ENCODE measurements at regions of chr12 and their contacts with region 1.

Region 1: DNA sequence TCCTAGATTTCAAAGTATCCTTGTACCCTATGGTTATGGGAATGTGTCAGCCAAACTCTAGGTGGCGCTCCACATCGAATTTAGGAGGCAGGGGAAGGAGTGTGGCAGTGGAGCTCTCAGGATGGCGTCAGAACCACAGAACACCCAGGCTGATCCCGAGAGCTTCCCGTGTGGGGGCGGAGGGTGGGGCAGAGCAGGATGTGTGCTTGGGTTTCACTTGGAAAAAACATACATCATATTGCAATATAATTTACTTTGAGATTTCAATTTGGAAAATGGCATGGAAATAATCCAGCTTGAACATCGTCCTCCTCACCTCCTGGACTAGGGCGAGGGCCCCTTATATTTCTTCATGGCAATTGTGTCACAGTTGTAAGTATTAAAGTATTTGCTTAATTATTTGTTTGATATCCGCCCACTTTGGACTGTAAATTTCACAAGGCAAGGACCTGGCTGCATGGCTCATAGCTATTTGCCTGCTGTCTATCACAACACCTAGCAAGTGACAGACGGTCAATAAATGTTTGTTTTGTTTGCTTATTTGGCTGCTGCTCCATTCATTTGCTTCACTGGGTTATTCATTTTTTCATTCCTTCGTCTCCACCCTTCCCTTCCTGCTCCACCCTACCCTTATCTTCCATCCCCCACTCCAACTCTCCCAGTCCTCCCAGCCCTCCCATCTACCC is 221.5 kb upstream of the HMGA2 start:
- DNase-seq: peak; percentile 39 to 70
- H3K4me3 ChIP-seq: no peak overlapping the region
- H3K27ac ChIP-seq: no peak overlapping the region
- H3K4me1 ChIP-seq: peaks cover 0 to 9% (median 2%) of the 10 kb centered on the region in 4 experiments; a peak in 2 of 7 replicates
- H3K27me3 ChIP-seq: no peaks in the 10 kb centered on the region
- CTCF ChIP-seq: peak; percentile 62 to 79 (median 64)
- EP300 ChIP-seq: no peak
- POLR2A ChIP-seq: no peak
- RAD21 ChIP-seq: peak; percentile 84 to 85

Region 2: DNA sequence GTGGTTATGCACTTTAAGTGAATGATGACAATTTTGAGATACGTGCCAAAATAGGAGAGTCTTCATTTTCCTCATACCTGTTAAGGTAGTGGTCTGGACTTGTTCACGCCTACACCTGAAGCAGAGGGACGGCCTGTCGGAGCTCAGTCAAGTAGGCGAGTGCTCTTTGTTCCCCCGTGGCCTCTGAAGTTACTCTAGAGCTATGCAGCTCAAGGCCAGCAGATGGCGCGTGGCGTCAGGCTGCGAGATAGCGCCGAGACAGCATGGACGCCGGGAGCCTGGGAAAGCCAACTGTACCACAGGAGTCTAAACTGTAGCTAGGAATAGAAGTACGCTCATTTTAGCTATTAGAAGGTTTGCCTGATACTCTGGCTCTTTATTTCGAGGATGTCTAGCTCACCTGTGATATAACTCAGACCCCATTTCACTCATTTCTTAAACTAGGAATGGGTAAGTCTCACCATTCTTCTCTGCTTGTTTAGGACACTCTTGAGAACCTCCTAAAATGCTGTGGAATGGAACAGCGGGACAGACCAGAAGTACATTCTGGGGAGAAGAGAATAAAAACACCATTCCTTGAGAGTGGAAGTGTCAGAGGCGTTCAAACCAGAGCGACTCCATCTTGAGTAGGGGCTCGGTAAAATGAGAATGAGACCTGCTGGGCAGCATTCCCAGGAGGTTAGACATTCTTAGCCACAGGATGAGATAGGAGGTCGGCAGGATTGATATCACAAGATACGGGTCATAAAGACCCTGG is 45.9 kb before region 1 on chr12:
- CTCF ChIA-PET with region 1: interaction called, 12 read pairs
- POLR2A ChIA-PET with region 1: no interaction called
- DNase-seq: peak; percentile 74 to 90
- H3K4me3 ChIP-seq: no peak overlapping the region
- H3K27ac ChIP-seq: no peak overlapping the region
- H3K4me1 ChIP-seq: no peaks in the 10 kb centered on the region
- H3K27me3 ChIP-seq: no peaks in the 10 kb centered on the region
- CTCF ChIP-seq: peak; percentile 91 to 92 (median 92)
- EP300 ChIP-seq: no peak
- POLR2A ChIP-seq: no peak
- RAD21 ChIP-seq: peak; percentile 94 to 96

Region 3: GRCh38 chr12:65620046-65620445 is 17.3 kb after region 1 on chr12:
- CTCF ChIA-PET with region 1: interaction called, 22 read pairs
- POLR2A ChIA-PET with region 1: no interaction called
- DNase-seq: no peak
- H3K4me3 ChIP-seq: no peak overlapping the region
- H3K27ac ChIP-seq: no peak overlapping the region
- H3K4me1 ChIP-seq: no peaks in the 10 kb centered on the region
- H3K27me3 ChIP-seq: no peaks in the 10 kb centered on the region; a peak in 1 of 7 replicates
- CTCF ChIP-seq: no peak
- EP300 ChIP-seq: no peak
- POLR2A ChIP-seq: no peak
- RAD21 ChIP-seq: no peak

Region 4: DNA sequence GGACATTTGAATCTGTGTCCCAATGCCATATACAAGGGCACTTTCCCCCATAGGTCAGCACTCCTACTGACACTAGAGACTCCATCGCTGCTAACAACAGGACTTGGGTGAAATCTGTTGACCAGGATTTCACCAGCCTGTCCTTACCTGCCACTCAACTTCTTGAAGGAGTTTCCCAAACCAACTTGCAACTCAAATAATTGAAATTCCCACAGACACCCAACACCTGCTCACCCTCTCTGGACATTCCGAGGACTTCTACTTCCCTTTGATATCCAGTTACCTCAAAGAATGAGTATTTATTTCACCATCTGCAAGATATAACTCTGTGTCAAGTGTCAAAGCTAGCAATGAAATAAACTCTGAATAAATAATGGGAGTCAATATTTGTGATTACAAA is 483.2 kb after region 1 on chr12:
- CTCF ChIA-PET with region 1: interaction called, 11 read pairs
- POLR2A ChIA-PET with region 1: no interaction called
- DNase-seq: no peak
- H3K4me3 ChIP-seq: no peak overlapping the region
- H3K27ac ChIP-seq: no peak overlapping the region
- H3K4me1 ChIP-seq: no peaks in the 10 kb centered on the region
- H3K27me3 ChIP-seq: no peaks in the 10 kb centered on the region
- CTCF ChIP-seq: no peak
- EP300 ChIP-seq: no peak
- POLR2A ChIP-seq: no peak
- RAD21 ChIP-seq: no peak